Activated CD4-positive, alpha-beta T cell treated with anti-CD3 and anti-CD28 coated beads for 36 hours (primary cell): ENCODE measurements at regions of chr19 and their contacts with region 1.

Region 1: GRCh38 chr19:6801485-6802086 is 29.1 kb downstream of the VAV1 start:
- DNase-seq: peak; percentile 90
- ATAC-seq: peak; percentile 75
- H3K4me3 Mint-ChIP-seq: peak overlapping the region; percentile 82
- H3K27ac Mint-ChIP-seq: peak overlapping the region; percentile 98
- H3K4me1 Mint-ChIP-seq: peaks cover 72% of the 10 kb centered on the region
- H3K27me3 Mint-ChIP-seq: no peaks in the 10 kb centered on the region

Region 2: DNA sequence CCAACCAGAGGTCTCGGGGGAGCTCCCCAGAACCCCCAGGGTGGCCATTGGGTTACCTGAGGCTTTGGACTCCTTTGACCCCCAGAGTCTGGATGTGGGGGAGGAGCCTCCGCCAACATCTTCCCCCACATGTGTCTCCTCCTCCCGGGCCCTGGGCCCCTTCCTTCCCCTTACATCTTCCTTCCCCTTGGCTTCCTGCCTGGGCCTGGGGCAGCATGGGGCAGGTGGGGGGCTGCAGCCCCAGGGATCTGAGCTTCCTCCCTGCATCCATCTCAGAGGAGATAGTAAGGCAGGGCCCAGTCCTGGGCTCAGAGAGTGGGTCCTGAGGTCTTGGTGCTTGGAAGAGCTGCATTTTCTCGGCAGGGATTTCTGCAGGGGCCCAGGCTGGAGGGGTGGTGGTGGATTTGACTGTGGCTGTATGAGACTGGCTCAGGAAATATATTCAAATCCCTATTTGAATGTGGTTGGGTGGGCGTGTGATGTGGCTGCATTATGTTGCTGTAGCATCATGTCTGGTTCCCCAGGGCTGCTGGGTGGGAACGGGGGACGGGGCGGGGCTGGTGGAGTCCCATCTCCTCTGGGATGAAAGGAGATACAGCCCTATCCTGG is 28.2 kb before region 1 on chr19:
- CTCF ChIA-PET with region 1: interaction called, 11 read pairs
- POLR2A ChIA-PET with region 1: interaction called, 18 read pairs
- intact Hi-C with region 1: loop called (anchors 1 kb)
- DNase-seq: peak; percentile 84
- ATAC-seq: peak; percentile 50
- H3K4me3 Mint-ChIP-seq: peak overlapping the region; percentile 97
- H3K27ac Mint-ChIP-seq: peak overlapping the region; percentile 98
- H3K4me1 Mint-ChIP-seq: peaks cover 54% of the 10 kb centered on the region
- H3K27me3 Mint-ChIP-seq: no peaks in the 10 kb centered on the region

Region 3: DNA sequence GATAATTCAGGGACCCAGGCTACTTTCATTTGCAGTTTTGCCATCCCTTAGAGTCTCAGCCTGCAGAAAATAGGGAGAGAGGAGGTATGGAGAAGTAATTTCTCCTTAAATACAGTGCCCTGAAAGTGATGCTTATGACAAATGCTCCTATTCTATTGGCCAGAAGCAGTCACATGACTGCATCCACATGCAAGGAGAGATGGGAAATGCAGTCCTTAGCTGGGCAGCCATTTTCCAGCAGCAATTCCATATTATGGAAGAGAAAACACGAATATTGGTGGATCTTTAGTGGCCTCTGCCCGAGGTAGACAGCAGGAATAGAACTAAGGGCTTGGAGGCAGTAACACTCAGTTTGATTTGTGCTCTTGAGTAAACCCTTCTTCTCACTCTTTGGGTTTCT is 10.3 kb after region 1 on chr19:
- CTCF ChIA-PET with region 1: interaction called, 13 read pairs
- POLR2A ChIA-PET with region 1: interaction called, 6 read pairs
- intact Hi-C with region 1: loop called in 1 of 2 experiments (anchors 1 kb)
- DNase-seq: no peak
- ATAC-seq: no peak
- H3K4me3 Mint-ChIP-seq: no peak overlapping the region
- H3K27ac Mint-ChIP-seq: no peak overlapping the region
- H3K4me1 Mint-ChIP-seq: peaks cover 75% of the 10 kb centered on the region
- H3K27me3 Mint-ChIP-seq: no peaks in the 10 kb centered on the region

Region 4: GRCh38 chr19:7970716-7971448 is 1169.3 kb after region 1 on chr19:
- CTCF ChIA-PET with region 1: no interaction called
- POLR2A ChIA-PET with region 1: no interaction called
- intact Hi-C with region 1: no loop called
- DNase-seq: peak; percentile 56
- ATAC-seq: peak; percentile 65
- H3K4me3 Mint-ChIP-seq: no peak overlapping the region
- H3K27ac Mint-ChIP-seq: no peak overlapping the region
- H3K4me1 Mint-ChIP-seq: no peaks in the 10 kb centered on the region
- H3K27me3 Mint-ChIP-seq: no peaks in the 10 kb centered on the region